Activated CD8-positive, alpha-beta memory T cell treated with anti-CD3 and anti-CD28 coated beads, Interleukin-2, amount 10 ng/mL, durations not matched to agents 7 days and 5 days (primary cell): ENCODE measurements at regions of chr11 and their contacts with region 1.

Region 1: DNA sequence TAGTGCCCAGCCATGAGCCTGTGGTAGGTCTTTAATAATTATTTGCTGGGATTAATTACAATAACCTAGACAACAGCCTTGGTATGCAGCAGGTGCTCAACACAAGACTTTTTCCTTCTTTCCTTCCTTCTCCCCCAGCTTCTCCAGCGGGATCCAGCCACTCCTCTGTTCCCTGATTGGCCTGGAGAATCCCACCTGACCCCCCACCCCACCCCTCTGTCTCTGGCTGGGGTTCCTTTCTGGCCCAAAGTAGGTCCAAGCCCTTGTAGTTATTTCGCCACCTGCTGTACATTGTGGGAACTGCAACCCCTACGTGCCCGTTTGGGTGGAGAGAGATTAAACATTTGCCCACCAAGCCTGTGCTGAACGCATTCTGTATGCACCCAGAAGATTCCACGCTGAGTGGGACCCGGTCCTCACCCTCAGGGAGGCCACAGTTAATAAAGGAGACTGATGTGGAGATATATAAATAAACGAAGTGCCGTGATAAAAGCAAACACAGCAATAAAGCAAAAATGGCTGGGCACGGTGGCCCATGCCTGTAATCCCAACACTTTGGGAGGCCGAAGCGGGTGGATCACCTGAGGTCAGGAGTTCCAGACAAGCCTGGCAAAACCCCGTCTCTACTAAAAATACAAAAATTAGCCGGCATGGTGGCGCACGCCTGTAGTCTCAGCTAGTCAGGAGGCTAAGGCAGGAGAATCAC is 32.1 kb upstream of the DGKZ start:
- DNase-seq: peak; percentile 82
- ATAC-seq: peak; percentile 73
- H3K4me3 Mint-ChIP-seq: no peak overlapping the region
- H3K27ac Mint-ChIP-seq: no peak overlapping the region
- H3K4me1 Mint-ChIP-seq: peaks cover 21% of the 10 kb centered on the region
- H3K27me3 Mint-ChIP-seq: peaks cover 2% of the 10 kb centered on the region

Region 2: GRCh38 chr11:46346886-46347636 is 31.9 kb after region 1 on chr11 and contains the start of gene DGKZ:
- CTCF ChIA-PET with region 1: interaction called, 12 read pairs
- DNase-seq: peak; percentile 88
- ATAC-seq: peak; percentile 75
- H3K4me3 Mint-ChIP-seq: peak within 1 kb of the TSS; percentile 89
- H3K27ac Mint-ChIP-seq: peak within 1 kb of the TSS; percentile 94
- H3K4me1 Mint-ChIP-seq: peaks cover 66% of the 10 kb centered on the region
- H3K27me3 Mint-ChIP-seq: peaks cover 21% of the 10 kb centered on the region
- total RNA-seq, gene DGKZ: 96.9 to 132 TPM

Region 3: GRCh38 chr11:46513934-46514342 is 198.8 kb after region 1 on chr11:
- CTCF ChIA-PET with region 1: no interaction called
- DNase-seq: no peak
- ATAC-seq: no peak
- H3K4me3 Mint-ChIP-seq: no peak overlapping the region
- H3K27ac Mint-ChIP-seq: no peak overlapping the region
- H3K4me1 Mint-ChIP-seq: peaks cover 5% of the 10 kb centered on the region
- H3K27me3 Mint-ChIP-seq: no peaks in the 10 kb centered on the region